ENCODE measurements at regions of chr3 and their contacts with region 1.

Region 1: DNA sequence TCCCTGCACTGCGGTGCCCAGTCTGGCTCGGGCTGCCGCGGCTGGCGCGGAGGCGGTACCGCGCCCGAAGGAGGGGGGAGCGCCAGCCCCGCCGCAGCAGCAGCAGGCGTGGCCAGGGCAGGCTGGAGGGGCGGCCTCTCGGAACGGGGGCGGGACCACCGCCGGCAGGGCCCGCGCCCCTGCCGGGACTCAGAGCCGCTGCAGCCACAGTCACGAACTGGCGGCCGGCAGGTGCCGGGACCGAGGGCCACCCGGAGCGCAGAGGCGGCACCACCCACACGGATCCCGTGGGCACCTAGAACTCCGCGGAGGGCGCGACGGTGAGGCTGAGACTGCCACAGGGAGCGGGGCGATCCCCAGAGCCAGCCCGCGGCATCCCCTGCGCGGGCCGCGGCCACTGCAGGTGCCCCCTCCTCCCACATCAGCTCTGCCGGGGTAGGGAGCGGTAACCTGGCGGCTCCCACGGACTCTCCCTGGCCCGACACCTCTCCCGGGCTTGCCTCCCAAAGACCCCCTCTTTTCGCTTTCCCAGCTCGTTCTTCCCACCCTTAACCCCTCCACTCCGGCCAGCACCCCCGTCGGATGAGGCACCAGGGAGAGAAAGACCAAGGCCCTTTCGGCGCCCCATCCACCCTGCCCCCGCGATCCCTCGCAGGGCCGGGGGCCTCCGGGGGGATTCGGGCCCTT is at the start of gene VWA5B2:
- DNase-seq: peak; percentile 90
- CTCF ChIP-seq: no peak

Region 2: GRCh38 chr3:183895296-183895695 is 334.2 kb before region 1 on chr3:
- CTCF ChIA-PET with region 1: interaction called, 10 read pairs
- POLR2A ChIA-PET with region 1: no interaction called
- DNase-seq: peak; percentile 86
- CTCF ChIP-seq: peak; percentile 79

Region 3: DNA sequence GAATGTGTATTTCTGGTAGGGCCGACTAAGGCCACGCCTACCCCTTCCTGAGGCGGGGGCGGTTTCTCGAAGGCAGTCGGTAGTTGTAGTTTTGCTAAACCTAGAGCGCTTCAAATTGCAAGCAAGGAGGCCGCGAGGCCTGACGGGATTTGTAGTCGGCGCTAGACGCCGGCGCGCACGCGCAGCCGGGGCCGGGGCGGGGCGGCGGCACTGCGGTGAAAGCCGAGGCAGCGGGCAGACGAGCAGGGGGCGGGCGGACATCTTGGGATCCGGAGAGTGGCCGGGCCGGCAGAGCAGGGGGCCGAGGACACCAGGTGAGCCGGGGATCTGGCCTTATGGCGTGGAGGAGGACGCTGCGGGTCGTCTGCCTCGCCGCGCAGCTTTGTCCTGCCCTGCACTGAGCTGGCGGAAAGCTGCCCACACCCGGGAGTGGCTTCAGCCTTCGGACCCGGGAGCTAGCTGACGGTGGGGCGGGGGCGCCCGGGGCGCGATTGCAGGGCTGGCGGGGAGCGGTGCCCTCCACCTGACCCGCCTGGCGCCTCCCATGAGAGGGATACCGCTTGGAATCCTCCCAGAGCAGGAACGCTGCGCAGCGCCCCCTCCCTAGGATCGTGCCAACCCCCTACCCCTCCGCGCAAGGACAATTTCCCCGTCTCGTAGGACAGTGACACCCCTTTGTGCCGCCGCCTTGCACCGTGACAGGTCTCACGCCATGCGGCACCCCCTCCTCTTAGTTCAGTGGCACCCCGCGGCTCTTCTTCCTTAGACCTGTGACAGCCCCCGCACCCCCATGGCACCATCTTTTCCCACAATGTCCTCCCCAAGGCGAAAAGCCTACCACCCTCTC is 54.7 kb before region 1 on chr3 and contains the start of gene AP2M1:
- CTCF ChIA-PET with region 1: interaction called, 11 read pairs
- POLR2A ChIA-PET with region 1: no interaction called
- DNase-seq: peak; percentile 96
- CTCF ChIP-seq: peak; percentile 21

Region 4: GRCh38 chr3:184196536-184196935 is 33.0 kb before region 1 on chr3:
- CTCF ChIA-PET with region 1: interaction called, 17 read pairs
- POLR2A ChIA-PET with region 1: interaction called, 8 read pairs
- DNase-seq: no peak
- CTCF ChIP-seq: no peak

Region 5: DNA sequence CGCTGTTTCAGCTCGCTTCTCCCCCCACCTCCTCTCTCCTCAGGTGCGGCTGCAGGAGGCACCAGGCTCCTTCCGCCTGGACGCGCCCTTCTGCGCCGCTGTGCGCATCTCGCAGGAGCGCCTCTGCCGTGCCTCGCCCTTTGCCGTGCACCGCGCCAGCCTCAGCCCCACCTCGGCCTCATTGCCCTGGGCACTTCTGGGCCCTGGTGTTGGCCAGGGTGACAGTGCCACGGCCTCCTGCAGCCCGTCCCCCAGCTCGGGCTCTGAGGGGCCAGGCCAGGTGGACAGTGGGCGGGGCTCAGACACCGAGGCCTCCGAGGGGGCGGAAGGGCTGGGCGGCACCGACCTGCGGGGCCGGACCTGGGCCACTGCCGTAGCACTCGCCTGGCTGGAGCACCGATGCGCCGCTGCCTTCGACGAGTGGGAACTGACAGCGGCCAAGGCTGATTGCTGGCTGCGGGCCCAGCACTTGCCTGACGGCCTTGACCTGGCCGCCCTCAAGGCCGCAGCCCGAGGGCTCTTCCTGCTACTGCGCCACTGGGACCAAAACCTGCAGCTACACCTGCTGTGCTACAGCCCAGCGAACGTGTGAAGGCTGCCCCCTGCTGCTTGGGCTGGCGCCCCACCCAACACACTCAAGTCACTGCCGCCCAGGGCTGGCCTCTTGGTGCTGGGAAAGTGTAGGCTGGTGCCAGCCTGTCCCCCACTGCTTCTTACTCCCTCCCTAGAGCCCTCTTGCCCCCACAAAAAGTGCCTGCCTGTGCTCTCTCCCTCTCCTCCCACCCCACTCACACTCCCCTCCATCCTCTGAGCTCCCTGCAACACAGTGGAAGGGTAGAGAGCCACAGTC is 12.1 kb after region 1 on chr3:
- CTCF ChIA-PET with region 1: interaction called, 98 read pairs
- POLR2A ChIA-PET with region 1: no interaction called
- DNase-seq: peak; percentile 48
- CTCF ChIP-seq: peak; percentile 49

Region 6: DNA sequence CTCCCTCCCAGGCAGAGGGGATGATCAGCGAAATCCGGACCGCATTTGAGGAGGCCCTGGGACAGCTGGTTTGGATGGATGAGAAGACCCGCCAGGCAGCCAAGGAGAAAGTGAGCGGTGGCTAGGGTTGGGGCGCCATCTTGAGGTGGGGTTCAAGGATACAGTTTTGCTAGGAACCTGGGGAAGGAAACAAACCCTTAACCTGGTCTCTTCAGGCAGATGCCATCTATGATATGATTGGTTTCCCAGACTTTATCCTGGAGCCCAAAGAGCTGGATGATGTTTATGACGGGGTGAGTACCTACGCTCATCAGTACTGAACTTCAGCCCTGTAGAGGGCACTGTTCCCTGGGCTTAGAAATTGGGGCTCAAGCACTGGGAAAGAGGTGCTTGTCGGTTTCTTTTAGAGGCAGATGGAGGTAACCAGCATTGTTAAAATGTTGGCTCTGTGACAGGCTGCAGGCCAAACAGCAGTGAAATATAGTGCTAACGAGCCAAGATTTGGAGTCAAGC is 59.9 kb after region 1 on chr3:
- CTCF ChIA-PET with region 1: interaction called, 20 read pairs
- POLR2A ChIA-PET with region 1: no interaction called
- DNase-seq: peak; percentile 75
- CTCF ChIP-seq: peak; percentile 27

Region 7: GRCh38 chr3:184583578-184584425 is 354.3 kb after region 1 on chr3:
- CTCF ChIA-PET with region 1: no interaction called
- POLR2A ChIA-PET with region 1: no interaction called
- DNase-seq: no peak
- CTCF ChIP-seq: no peak

Measured in GM10248 (cell line).